ENCODE measurements at regions of chr14 and their contacts with region 1.

Region 1: GRCh38 chr14:77862154-77862786 is 62.4 kb downstream of the ADCK1 start:
- DNase-seq: peak; percentile 9 to 79 (median 48)
- ATAC-seq: peak; percentile 71
- H3K4me3 ChIP-seq: no peak overlapping the region
- H3K4me3 Mint-ChIP-seq: no peak overlapping the region
- H3K27ac ChIP-seq: no peak overlapping the region
- H3K27ac Mint-ChIP-seq: no peak overlapping the region
- H3K4me1 ChIP-seq: no peaks in the 10 kb centered on the region
- H3K4me1 Mint-ChIP-seq: peaks cover 0 to 5% (median 0%) of the 10 kb centered on the region in 7 donors
- H3K27me3 ChIP-seq: no peaks in the 10 kb centered on the region
- H3K27me3 Mint-ChIP-seq: no peaks in the 10 kb centered on the region

Region 2: GRCh38 chr14:77738559-77739250 is 123.6 kb before region 1 on chr14:
- CTCF ChIA-PET with region 1: no interaction called
- POLR2A ChIA-PET with region 1: no interaction called
- intact Hi-C with region 1: no loop called
- DNase-seq: no peak
- ATAC-seq: peak; percentile 59
- H3K4me3 ChIP-seq: no peak overlapping the region
- H3K4me3 Mint-ChIP-seq: no peak overlapping the region
- H3K27ac ChIP-seq: no peak overlapping the region
- H3K27ac Mint-ChIP-seq: peak overlapping the region in 1 of 9 donors; percentile 34
- H3K4me1 ChIP-seq: peaks cover 0 to 9% of the 10 kb centered on the region in 2 donors
- H3K4me1 Mint-ChIP-seq: peaks cover 11 to 27% (median 21%) of the 10 kb centered on the region in 7 donors
- H3K27me3 ChIP-seq: no peaks in the 10 kb centered on the region
- H3K27me3 Mint-ChIP-seq: no peaks in the 10 kb centered on the region

Region 3: DNA sequence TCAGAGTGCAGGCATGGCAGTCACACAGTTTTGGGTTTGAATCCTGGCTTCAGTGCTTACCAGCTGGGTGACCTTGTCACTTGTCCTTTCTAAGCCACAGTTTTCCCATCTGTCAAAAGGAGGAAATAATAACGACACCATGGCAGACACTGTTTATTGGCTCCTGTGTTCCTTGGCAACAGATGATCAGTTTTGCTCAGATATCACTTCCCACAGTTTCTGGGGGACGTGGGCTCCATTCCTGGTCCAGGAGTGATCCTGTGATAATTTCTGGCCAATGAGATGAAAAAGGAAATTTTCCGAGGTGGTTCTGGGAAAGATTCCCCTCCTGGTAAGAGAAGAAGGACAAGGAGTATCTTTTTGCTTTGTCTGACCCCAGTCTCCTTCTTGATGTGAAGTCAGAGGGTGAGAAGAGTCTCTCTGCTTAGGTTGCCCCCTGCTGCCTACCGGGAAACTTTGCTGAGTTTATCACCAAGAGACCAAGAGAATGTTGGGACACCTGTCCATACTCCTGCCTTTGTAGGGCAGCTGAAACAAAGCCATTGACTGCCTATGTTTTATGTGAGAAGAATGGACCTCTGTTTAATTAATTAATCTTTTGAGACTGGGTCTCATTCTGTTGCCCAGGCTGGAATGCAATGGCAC is 129.0 kb after region 1 on chr14:
- CTCF ChIA-PET with region 1: no interaction called
- POLR2A ChIA-PET with region 1: no interaction called
- intact Hi-C with region 1: loop called in 1 of 2 experiments (anchors 1 kb)
- DNase-seq: peak in 1 of 9 donors; percentile 2
- ATAC-seq: no peak
- H3K4me3 ChIP-seq: no peak overlapping the region
- H3K4me3 Mint-ChIP-seq: no peak overlapping the region
- H3K27ac ChIP-seq: no peak overlapping the region
- H3K27ac Mint-ChIP-seq: no peak overlapping the region
- H3K4me1 ChIP-seq: no peaks in the 10 kb centered on the region
- H3K4me1 Mint-ChIP-seq: no peaks in the 10 kb centered on the region
- H3K27me3 ChIP-seq: no peaks in the 10 kb centered on the region
- H3K27me3 Mint-ChIP-seq: peaks cover 0 to 11% (median 8%) of the 10 kb centered on the region in 5 donors

Region 4: GRCh38 chr14:78848234-78848820 is 986.1 kb after region 1 on chr14:
- CTCF ChIA-PET with region 1: no interaction called
- POLR2A ChIA-PET with region 1: no interaction called
- intact Hi-C with region 1: loop called in 1 of 2 experiments (anchors 5 kb)
- DNase-seq: peak in 1 of 9 donors; percentile 8
- ATAC-seq: no peak
- H3K4me3 ChIP-seq: no peak overlapping the region
- H3K4me3 Mint-ChIP-seq: no peak overlapping the region
- H3K27ac ChIP-seq: no peak overlapping the region
- H3K27ac Mint-ChIP-seq: no peak overlapping the region
- H3K4me1 ChIP-seq: no peaks in the 10 kb centered on the region
- H3K4me1 Mint-ChIP-seq: no peaks in the 10 kb centered on the region
- H3K27me3 ChIP-seq: no peaks in the 10 kb centered on the region
- H3K27me3 Mint-ChIP-seq: peaks cover 0 to 13% (median 8%) of the 10 kb centered on the region in 5 donors